Cardiac septum (tissue), 1 donor: ENCODE measurements at regions of chr6 and their contacts with region 1.

Region 1: GRCh38 chr6:34656378-34657036 is 40.1 kb downstream of the ILRUN start:
- DNase-seq: no peak

Region 2: DNA sequence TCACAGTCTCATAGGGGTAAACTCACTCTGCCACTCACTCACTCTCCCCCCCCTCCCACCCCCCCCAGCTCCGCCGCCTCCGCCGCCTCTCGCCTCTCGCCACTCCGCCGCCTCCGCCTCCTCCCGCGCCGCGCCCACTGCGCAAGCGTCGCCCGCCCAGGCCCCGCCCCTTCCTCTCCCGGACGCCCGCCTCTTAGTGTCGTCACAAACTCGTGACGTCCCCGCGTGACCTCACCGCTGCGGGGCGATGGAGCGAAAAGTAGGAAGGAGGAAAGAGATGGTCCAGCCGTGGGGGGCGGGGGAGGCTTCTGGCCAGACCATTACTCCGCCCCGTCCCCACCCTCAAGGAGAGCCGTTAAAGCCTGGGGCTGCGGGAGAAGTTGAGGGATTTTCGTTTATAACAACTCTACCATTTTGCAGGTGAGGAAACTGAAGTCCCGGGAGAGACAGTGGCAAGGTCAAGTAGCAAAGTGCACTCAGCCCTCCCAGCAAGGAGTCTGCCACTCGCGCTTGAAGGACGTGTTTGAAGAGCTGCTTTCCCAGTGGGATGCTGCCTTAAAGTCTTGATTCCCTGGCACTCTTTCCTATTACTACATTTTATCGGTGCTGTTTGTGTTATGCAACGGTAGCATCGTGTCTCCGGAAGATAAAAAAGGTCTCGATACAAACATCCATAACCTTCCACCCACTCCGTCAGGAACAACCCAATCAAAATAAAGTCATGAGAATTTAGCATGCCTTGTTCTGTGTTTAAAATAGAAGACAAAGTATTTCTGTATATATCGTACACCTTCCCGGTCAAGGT is 40.4 kb after region 1 on chr6 and contains the start of gene ILRUN:
- intact Hi-C with region 1: loop called (anchors 5 kb)
- DNase-seq: peak; percentile 99
- total RNA-seq, gene ILRUN: 104 TPM